ENCODE measurements at regions of chr17 and their contacts with region 1.

Region 1: DNA sequence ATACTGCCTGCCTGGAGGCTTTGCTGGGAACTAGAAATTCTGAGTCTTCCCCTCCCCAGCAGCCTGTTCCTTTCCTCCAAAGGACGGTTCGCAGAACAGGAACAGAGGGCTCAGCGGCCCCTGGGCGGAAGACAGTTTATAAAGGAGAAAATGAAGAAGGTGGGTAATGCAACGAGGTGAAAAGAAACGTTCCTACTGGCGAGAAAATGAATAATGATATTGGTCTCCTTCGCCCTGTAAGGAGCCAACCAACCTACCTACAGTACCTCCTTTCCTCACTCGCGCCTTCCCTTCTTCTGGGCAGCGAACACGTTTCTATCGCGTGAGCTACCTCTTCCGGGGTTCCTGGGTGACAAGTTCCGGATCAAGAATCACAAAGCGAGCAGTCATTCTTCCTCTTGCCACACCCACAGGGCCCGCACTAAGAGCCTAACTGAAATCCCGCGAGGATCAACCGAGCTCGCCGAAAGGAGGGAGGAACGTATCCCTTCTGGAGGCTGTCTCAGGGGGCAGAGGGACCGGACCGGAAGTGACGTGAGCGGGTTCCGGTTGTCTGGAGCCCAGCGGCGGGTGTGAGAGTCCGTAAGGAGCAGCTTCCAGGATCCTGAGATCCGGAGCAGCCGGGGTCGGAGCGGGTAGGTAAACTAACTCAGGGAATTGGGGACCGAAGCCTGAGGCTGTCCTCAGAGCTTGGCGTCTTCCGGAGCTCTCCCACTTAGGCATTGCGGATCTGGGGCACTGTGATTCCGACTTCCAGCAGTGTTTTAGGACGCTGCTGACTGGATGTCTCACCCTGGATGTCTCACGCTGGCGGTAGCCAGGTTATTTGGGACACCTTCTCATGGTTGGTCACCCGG is at the starts of genes PTRH2 and VMP1:
- DNase-seq: peak; percentile 92
- H3K4me3 Mint-ChIP-seq: peak within 1 kb of the TSS; percentile 98
- H3K27ac Mint-ChIP-seq: peak within 1 kb of the TSS; percentile 96
- H3K4me1 Mint-ChIP-seq: peaks cover 50% of the 10 kb centered on the region
- H3K27me3 Mint-ChIP-seq: no peaks in the 10 kb centered on the region
- total RNA-seq, gene PTRH2: 49.7 and 51.1 TPM in 2 replicates
- total RNA-seq, gene VMP1: 357 and 374 TPM in 2 replicates

Region 2: DNA sequence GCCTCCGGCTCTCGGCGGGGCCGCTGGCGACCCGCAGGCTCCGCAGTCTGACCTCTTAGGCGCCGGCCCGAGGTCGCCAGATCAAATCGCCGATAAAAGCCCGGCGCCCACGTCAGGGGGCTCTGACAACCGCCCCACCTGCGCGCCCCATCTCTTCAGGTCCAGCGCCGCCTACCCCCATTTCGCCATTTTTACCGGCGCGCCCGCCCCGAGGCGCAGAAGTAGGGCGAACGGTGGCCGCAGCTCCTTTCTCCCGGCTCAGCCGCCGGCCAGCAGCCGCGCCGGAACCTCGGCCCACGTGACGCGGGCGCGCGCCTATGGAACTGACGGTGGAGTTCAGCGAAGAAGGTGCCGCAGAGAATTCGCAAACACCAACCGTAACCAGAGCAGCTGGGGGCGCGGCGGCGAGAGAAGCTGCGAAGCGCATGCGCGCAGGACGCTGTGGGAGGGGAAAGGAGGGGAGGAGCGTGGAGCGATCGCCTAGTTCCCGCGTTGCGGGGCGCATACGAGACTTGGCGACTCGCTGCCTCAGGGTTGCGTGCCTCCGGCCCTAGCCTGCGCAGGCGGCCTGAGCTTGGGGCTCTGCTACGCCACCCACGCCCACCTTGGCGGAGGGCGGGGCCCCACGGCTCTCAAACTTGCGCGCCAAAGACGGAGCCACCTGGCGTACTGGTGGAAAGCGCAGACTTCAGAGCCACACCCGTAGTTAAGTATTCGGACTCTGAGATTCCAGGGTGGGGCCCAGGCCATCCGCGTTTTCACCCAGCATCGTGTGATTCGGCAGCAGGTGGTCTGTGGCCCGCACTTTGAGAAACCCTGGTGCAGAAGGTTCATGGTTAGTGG is 600.7 kb before region 1 on chr17 and contains the start of gene TRIM37:
- intact Hi-C with region 1: loop called (anchors 2 kb)
- DNase-seq: peak; percentile 100
- H3K4me3 Mint-ChIP-seq: peak within 1 kb of the TSS; percentile 97
- H3K27ac Mint-ChIP-seq: peak within 1 kb of the TSS; percentile 90
- H3K4me1 Mint-ChIP-seq: peaks cover 66% of the 10 kb centered on the region
- H3K27me3 Mint-ChIP-seq: peaks cover 1% of the 10 kb centered on the region
- total RNA-seq, gene TRIM37: 27.5 and 27.7 TPM in 2 replicates

Region 3: DNA sequence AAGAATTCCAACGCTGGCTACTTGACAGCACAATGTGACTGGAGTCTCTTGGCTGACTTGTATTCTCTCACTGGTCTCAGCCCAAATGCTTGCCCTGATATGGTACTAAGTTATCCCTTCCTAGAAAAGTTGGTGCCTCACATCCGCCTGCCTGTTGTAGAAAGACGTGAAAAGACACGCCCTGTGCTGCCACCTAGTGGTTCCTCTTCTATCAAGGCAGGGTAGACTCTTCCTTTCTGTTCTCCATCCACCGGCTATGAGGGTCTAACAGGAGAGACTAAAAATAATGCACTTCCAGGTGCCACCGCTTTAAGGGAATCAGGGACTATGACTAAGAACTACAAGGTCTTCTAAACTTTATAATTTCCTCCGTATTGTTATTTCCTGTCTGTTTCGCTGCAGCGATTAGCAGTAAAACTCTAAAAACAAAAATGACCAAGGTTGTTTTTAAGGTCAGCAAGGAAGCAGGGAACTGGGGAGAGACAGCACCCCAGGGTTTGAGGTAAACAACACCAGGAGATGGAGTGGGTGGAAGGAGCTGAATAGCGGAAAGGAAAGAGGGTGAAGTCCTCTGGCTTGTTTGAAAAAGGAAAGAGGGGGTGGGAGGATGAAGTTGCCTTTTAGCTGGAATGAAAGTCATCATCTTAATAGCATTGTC is 266.4 kb before region 1 on chr17:
- intact Hi-C with region 1: loop called (anchors 10 kb)
- DNase-seq: peak; percentile 81
- H3K4me3 Mint-ChIP-seq: peak overlapping the region; percentile 74
- H3K27ac Mint-ChIP-seq: peak overlapping the region; percentile 96
- H3K4me1 Mint-ChIP-seq: peaks cover 61% of the 10 kb centered on the region
- H3K27me3 Mint-ChIP-seq: peaks cover 5% of the 10 kb centered on the region

Region 4: GRCh38 chr17:59572301-59572928 is 134.9 kb before region 1 on chr17:
- intact Hi-C with region 1: no loop called
- DNase-seq: no peak
- H3K4me3 Mint-ChIP-seq: no peak overlapping the region
- H3K27ac Mint-ChIP-seq: peak overlapping the region; percentile 32
- H3K4me1 Mint-ChIP-seq: peaks cover 14% of the 10 kb centered on the region
- H3K27me3 Mint-ChIP-seq: no peaks in the 10 kb centered on the region

Region 5: DNA sequence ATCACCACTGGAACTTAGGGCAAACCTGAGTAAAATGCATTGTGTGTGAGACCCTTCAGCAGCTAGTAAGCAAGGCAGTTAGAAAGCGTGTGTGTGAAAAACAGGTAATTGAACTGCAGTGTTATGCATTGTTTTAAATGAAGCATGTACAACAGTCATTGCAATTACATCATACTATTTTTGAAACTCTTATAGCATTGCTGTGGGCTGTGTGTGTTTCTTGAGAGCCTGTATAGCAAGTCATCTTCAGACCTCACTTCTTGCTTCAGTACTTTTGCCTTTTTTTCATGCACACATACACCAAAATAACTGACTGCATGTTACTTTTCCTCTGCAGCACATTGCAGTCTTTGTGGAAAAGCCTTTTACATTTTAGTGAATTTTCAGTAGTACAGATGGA is 19.3 kb before region 1 on chr17:
- intact Hi-C with region 1: loop called (anchors 2 kb)
- DNase-seq: no peak
- H3K4me3 Mint-ChIP-seq: no peak overlapping the region
- H3K27ac Mint-ChIP-seq: peak overlapping the region; percentile 28
- H3K4me1 Mint-ChIP-seq: peaks cover 14% of the 10 kb centered on the region
- H3K27me3 Mint-ChIP-seq: no peaks in the 10 kb centered on the region

Region 6: DNA sequence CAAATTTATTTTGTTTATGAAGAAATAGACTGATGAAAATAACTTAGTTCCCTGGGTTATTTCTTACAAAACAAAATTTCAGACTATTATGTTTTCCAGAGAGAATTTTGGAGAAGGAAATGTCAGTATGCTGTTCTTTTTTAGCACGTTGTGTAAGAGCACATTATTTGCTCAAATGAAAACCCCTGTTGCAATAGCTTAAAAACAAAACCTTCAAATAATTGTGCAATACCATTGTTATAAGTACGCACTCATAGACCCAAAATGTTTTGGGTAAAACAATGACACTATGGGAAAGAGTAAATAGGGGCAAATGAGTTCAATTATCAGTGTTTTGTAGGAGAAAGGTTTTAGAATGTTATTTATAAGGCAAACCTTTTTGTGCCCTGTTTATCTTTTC is 18.3 kb after region 1 on chr17:
- intact Hi-C with region 1: no loop called
- DNase-seq: no peak
- H3K4me3 Mint-ChIP-seq: no peak overlapping the region
- H3K27ac Mint-ChIP-seq: no peak overlapping the region
- H3K4me1 Mint-ChIP-seq: peaks cover 5% of the 10 kb centered on the region
- H3K27me3 Mint-ChIP-seq: no peaks in the 10 kb centered on the region

Region 7: GRCh38 chr17:59853168-59853918 is 146.0 kb after region 1 on chr17:
- intact Hi-C with region 1: loop called (anchors 2 kb)
- DNase-seq: peak; percentile 60
- H3K4me3 Mint-ChIP-seq: peak overlapping the region; percentile 55
- H3K27ac Mint-ChIP-seq: peak overlapping the region; percentile 85
- H3K4me1 Mint-ChIP-seq: peaks cover 52% of the 10 kb centered on the region
- H3K27me3 Mint-ChIP-seq: no peaks in the 10 kb centered on the region

Region 8: GRCh38 chr17:60392042-60392844 is 684.9 kb after region 1 on chr17 and contains the start of gene USP32:
- intact Hi-C with region 1: loop called (anchors 5 kb)
- DNase-seq: peak; percentile 97
- H3K4me3 Mint-ChIP-seq: peak within 1 kb of the TSS; percentile 97
- H3K27ac Mint-ChIP-seq: peak within 1 kb of the TSS; percentile 95
- H3K4me1 Mint-ChIP-seq: peaks cover 50% of the 10 kb centered on the region
- H3K27me3 Mint-ChIP-seq: no peaks in the 10 kb centered on the region
- total RNA-seq, gene USP32: 30.5 and 31.2 TPM in 2 replicates